ENCODE measurements at regions of chr1 and their contacts with region 1.

Region 1: DNA sequence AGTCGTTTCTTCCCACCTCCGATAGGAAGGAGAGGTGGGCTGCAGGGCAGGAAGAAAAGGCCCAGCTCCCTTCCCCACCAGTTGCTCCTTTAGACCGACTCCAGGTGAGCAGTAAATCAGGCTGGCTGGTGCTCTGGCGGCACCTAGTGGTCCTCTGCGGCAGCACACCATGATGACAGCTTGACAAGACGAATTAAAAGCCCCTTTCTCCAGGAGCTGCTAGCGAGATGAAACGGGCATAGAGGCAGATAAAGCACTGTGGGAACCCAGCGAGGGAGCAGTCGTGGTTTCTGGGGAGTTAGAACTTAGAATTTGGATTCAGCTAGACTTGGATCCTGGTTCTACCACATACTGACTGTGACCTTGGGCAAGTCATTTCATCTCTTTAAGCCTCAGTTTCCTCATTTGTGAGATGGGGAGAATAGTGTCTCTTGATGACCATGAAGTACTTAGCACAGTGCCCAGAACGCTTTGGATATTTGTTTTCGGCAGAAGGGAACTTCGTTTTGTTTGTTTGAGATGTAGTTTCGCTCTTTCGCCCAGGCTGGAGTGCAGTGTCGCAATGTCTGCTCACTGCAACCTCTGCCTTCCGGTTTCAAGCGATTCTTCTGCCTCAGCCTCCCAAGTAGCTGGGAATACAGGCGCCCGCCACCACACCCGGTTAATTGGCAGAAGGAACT is 21.8 kb upstream of the COL9A2 start:
- DNase-seq: no peak
- H3K4me3 ChIP-seq: no peak overlapping the region
- CTCF ChIP-seq: peak; percentile 95

Region 2: GRCh38 chr1:39933956-39934941 is 404.6 kb before region 1 on chr1:
- CTCF ChIA-PET with region 1: no interaction called
- POLR2A ChIA-PET with region 1: no interaction called
- DNase-seq: peak; percentile 88
- H3K4me3 ChIP-seq: no peak overlapping the region; the same call in 1 of the 2 replicates
- CTCF ChIP-seq: no peak

Region 3: DNA sequence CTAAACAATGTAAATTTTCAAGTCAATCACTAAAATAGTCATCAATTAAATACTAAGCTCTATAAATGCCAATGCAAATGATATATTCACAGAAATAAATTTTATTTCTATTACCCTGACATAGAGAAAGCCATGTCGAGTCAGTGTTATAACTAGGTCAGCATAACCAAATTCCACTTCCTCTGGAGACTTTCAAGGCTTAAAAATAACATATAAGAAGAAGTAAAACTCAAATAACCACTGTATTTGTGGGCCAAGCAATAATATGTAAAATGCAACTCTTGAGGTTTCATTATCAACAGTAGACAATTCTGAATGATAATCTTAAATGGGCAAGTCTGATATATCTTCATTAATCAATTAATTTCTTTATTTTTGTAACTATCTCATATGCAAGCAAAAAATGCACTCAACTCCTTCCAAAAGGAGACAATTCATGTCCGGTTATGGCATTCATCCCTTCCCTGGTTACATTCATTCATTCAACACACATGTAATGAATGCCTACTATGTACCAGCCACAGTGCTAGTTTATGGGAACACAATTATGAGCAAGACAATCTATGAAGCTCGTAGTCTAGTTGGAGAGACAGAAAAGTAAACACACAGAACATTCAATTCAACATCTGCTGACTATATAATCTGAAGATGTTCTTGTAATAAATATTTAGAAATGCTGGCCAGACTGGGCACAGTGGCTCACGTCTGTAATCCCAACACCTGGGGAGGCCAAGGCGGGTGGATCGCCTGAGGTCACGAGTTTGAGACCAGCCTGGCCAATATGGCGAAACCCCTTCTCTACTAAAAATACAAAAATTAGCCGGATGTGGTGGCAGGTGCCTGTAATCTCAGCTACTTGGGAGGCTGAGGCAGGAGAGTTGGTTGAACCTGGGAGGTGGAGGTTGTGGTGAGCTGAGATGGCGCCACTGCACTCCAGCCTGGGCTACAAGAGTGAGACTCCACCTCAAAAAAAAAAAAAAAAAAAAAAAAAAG is 335.4 kb before region 1 on chr1:
- CTCF ChIA-PET with region 1: no interaction called
- POLR2A ChIA-PET with region 1: no interaction called
- DNase-seq: no peak
- H3K4me3 ChIP-seq: no peak overlapping the region
- CTCF ChIP-seq: no peak

Region 4: DNA sequence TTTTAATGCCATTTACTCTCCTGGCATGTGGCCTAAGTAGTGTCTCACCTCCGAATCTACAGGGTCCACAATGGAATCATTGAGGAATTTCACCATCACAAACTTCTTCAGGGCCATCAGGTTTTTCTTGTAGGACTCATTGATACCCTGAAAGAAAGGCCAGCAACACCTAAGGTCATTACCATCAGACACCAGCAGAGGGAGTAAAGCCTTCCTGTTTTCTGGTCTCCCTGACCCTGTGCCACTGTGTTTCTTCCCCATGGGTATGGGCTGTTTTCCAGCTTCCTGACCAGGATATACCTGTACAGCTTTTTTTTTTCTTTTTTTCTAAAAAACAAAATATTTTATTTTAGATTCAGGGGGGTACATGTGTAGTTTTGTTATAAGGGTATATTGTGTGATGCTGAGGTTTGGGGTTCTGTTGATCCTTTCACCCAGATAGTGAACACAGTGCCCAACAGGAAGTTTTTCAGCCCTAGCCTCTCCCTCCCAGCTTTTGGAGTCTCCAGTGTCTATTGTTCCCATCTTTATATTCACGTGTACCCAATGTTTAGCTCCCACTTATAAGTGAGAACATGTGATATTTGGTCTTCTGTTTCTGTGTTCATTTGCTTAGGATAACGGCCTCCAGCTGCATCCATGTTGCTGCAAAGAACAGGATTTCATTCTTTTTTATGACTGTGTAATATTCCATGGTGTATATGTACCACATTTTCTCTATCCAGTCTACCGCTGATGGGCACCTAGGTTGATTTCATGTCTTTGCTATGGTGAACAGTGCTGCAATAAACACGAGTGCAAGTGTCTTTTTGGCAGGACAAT is 260.2 kb before region 1 on chr1:
- CTCF ChIA-PET with region 1: interaction called, 292 read pairs
- POLR2A ChIA-PET with region 1: no interaction called
- DNase-seq: no peak
- H3K4me3 ChIP-seq: no peak overlapping the region
- CTCF ChIP-seq: peak; percentile 79

Region 5: GRCh38 chr1:40143891-40144575 is 194.9 kb before region 1 on chr1:
- CTCF ChIA-PET with region 1: interaction called, 433 read pairs
- POLR2A ChIA-PET with region 1: no interaction called
- DNase-seq: no peak
- H3K4me3 ChIP-seq: no peak overlapping the region
- CTCF ChIP-seq: peak; percentile 69

Region 6: DNA sequence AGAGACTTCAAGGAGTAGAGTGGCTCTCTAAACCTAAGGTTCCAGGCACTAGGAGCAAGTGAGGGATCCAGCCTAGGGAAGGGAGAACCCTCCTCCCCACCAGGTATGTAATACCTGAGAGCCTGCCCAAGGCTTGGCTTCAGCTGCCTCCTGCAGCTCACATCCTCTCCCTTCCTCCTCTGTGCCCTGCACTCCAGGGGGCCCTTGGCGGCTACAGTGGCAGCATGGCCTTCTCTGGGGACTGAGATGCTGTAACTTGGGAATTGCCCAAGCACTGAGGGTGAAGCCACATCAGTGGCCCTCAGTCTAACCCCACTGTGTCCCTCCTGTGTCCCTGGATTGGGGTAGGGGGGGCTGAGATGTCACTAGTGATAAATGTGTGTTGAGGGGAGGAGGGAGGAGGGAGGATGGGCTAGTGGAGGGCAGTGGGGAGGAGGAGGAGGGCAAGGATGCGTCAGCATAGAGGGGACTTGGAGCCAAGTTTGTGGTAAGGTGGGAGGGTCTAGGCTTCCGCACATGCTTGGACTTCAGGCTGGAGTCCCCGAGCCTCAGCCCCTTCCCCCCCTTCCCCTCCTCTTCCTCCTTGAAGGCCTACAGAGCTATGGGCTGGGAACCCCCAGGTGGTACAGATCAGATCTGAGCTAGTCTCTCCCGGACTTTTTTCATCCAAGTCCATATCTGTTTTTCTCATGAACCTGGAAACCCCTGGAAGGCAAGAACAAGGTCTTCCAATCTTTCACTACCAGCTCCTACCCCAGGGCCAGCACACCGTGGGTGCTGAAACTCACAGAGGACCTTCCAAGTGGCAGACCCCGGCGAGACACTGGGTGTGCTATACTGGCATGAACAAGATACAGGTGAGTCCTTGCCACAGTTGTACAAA is 39.3 kb before region 1 on chr1:
- CTCF ChIA-PET with region 1: interaction called, 12 read pairs
- POLR2A ChIA-PET with region 1: no interaction called
- DNase-seq: no peak
- H3K4me3 ChIP-seq: no peak overlapping the region
- CTCF ChIP-seq: no peak

Region 7: GRCh38 chr1:40352126-40352525 is 13.2 kb after region 1 on chr1:
- CTCF ChIA-PET with region 1: interaction called, 49 read pairs
- POLR2A ChIA-PET with region 1: no interaction called
- DNase-seq: no peak
- H3K4me3 ChIP-seq: no peak overlapping the region
- CTCF ChIP-seq: no peak

Region 8: DNA sequence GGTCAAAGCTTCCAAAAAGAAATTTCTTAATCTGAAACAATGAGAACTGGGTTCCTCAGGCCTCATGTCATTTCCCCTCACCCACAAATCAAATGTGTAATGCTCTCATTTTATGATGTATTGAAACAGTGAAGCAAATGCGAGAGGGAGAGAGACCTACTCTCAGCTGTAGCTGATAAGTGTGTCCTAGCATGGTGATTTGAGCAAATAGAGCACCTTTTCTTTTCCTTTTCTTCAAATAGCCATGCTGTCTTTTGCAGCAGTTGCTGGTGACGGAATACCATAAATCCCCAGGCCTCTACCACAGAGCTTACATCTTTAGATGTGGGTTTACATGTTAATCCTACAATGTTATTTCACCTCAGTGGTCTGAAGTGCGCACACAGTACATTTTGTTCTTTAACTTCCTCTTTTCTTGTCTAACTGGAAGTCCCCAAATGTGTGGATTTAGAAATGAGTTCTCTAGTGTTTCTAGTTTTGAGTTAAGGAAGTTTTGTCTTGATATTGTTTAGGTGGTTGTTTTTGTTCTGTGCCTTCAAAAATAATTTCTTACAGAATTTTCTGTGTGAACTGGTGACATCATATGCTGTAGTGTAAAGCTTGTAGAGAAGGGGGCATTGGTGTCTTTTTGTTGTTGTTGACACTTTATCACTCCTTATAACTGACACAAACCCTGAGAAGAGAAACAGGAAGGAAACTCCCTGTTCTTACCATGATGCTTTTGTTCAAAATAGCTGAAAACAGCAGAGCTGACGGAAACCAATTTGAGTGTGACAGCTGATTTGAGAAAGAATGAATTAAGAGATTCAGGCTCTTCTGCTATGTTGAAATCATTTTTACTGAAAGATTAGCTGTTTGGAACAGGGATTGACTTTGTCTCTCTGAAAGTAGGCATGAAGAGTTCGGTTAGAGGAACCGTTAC is 46.8 kb after region 1 on chr1:
- CTCF ChIA-PET with region 1: interaction called, 14 read pairs
- POLR2A ChIA-PET with region 1: no interaction called
- DNase-seq: no peak
- H3K4me3 ChIP-seq: no peak overlapping the region
- CTCF ChIP-seq: no peak

Region 9: DNA sequence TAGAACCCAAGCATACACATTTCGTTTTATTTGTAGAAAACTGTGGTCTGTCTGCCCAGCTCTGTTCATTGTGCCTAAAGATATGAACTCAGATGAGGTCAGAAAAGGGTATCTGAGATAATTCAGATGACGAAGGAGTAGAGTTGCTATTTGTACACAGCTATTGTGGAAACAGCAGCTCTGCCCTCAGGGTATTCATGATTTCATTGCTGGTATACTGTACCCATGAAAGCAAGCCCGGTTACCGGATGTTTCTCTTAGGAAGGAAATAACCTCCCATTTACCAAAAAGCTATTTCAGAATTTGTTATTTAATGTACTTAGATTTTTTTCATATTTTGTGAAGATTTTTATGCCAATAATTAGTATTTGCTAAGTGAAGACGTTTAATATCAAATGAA is 72.4 kb after region 1 on chr1:
- CTCF ChIA-PET with region 1: interaction called, 14 read pairs
- POLR2A ChIA-PET with region 1: no interaction called
- DNase-seq: no peak
- H3K4me3 ChIP-seq: no peak overlapping the region
- CTCF ChIP-seq: no peak

Region 10: GRCh38 chr1:40532844-40533424 is 194.0 kb after region 1 on chr1:
- CTCF ChIA-PET with region 1: no interaction called
- POLR2A ChIA-PET with region 1: no interaction called
- DNase-seq: no peak
- H3K4me3 ChIP-seq: no peak overlapping the region
- CTCF ChIP-seq: peak; percentile 53

Measured in AG04449 (cell line).